ENCODE measurements at regions of chr20 and their contacts with region 1.

Region 1: GRCh38 chr20:31723319-31724078 is 831 bp upstream of the BCL2L1 start:
- DNase-seq: peak; percentile 99
- ATAC-seq: peak; percentile 90
- H3K4me3 Mint-ChIP-seq: peak overlapping the region; percentile 99
- H3K27ac Mint-ChIP-seq: peak overlapping the region; percentile 91
- H3K4me1 Mint-ChIP-seq: peaks cover 29% of the 10 kb centered on the region
- H3K27me3 Mint-ChIP-seq: peaks cover 2% of the 10 kb centered on the region

Region 2: GRCh38 chr20:31633339-31633914 is 90.1 kb before region 1 on chr20:
- POLR2A ChIA-PET with region 1: interaction called, 15 read pairs
- DNase-seq: no peak
- ATAC-seq: no peak
- H3K4me3 Mint-ChIP-seq: no peak overlapping the region
- H3K27ac Mint-ChIP-seq: no peak overlapping the region
- H3K4me1 Mint-ChIP-seq: peaks cover 7% of the 10 kb centered on the region
- H3K27me3 Mint-ChIP-seq: peaks cover 14% of the 10 kb centered on the region

Region 3: GRCh38 chr20:31661625-31662371 is 61.7 kb before region 1 on chr20:
- POLR2A ChIA-PET with region 1: interaction called, 149 read pairs
- DNase-seq: peak; percentile 86
- ATAC-seq: peak; percentile 73
- H3K4me3 Mint-ChIP-seq: peak overlapping the region; percentile 84
- H3K27ac Mint-ChIP-seq: peak overlapping the region; percentile 87
- H3K4me1 Mint-ChIP-seq: peaks cover 42% of the 10 kb centered on the region
- H3K27me3 Mint-ChIP-seq: no peaks in the 10 kb centered on the region

Region 4: GRCh38 chr20:31674895-31675827 is 48.3 kb before region 1 on chr20:
- POLR2A ChIA-PET with region 1: interaction called, 124 read pairs
- DNase-seq: peak; percentile 60
- ATAC-seq: peak; percentile 59
- H3K4me3 Mint-ChIP-seq: peak overlapping the region; percentile 86
- H3K27ac Mint-ChIP-seq: peak overlapping the region; percentile 93
- H3K4me1 Mint-ChIP-seq: peaks cover 70% of the 10 kb centered on the region
- H3K27me3 Mint-ChIP-seq: no peaks in the 10 kb centered on the region

Region 5: DNA sequence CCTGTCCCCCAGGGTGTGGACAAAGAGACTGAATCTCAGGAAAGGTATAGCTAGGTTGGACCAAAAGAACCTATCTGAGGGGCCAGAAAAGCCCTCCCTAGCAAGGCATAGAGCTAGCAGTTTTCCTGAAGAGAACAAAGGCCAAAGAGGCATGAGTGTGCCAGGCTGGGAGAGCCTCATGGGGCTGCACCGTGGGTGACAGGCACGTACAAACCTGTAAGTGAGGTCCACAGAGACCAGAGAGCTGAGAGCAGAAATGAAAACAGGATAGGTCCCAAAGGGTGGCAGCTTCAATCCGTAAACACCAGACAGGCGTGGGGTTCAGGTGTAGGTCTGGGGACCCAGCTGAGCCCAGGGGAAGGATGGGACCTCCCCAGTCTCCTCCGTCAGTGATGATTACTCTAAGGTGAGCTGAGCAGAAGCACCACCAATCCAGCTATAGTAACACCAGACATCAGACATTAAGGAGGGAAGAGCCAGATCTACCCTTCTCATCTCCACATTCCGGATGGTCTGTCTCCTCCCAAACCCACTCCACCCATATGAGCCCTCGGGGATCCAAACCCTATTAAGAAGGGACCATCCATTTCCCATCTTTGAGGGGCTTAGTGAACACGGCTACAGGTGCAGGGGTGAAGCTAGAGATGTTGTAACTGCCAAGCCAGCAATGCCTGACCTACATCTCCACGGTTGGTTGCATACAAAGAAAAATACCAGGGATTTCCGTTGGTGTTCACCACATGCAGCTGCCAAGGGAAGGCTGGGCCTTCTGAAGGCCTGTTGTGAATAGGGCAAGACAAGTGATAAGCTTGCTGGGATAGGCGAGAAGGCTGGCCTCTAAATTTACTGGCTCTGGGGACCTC is 39.1 kb before region 1 on chr20:
- POLR2A ChIA-PET with region 1: interaction called, 29 read pairs
- DNase-seq: no peak
- ATAC-seq: peak; percentile 51
- H3K4me3 Mint-ChIP-seq: peak overlapping the region; percentile 35
- H3K27ac Mint-ChIP-seq: peak overlapping the region; percentile 87
- H3K4me1 Mint-ChIP-seq: peaks cover 69% of the 10 kb centered on the region
- H3K27me3 Mint-ChIP-seq: no peaks in the 10 kb centered on the region

Region 6: DNA sequence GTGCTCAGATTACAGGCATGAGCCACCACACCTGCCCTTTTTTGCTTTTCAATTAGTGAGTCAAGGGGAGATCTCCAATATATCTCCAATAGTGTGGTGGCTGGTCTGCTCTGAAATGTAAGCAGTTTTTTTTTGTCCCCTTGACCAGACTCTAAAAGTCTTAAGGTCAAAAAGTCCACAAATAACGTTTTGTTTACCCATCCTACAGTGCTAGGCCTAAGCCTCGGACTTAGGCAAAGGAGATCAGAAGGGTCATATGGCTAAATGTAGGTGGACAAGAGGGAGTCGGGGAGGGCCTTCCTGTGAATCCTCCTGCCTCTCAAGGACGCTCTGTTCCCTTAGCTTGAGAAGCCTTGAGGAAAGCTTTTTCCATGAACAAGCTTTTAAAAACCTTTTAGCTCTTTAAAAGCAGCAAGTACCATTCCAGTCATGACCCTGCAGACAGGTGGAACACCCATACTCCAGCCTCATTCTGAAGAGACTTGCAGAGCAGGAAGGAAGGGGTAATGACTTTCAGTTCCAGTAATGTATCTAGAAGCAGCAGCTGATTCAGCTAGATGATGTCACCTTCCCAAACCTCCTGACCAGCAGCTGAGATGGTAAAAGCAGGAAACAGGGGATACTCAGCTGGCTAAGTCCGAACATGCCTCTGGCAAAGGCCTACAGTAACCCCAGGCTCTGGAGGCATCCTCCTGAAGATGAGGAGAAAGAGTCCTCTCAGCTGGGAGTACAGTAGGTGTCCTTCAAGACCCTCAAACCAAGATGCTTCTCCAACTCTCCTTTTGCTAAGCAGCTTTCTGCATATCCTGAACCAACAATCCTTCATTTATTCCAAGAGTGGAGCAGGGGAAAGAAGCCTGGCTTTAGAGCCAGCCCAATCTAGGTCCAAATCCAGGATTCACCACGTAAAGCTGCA is 24.4 kb before region 1 on chr20:
- POLR2A ChIA-PET with region 1: interaction called, 10 read pairs
- DNase-seq: no peak
- ATAC-seq: peak; percentile 85
- H3K4me3 Mint-ChIP-seq: peak overlapping the region; percentile 66
- H3K27ac Mint-ChIP-seq: peak overlapping the region; percentile 85
- H3K4me1 Mint-ChIP-seq: peaks cover 57% of the 10 kb centered on the region
- H3K27me3 Mint-ChIP-seq: no peaks in the 10 kb centered on the region

Region 7: GRCh38 chr20:31738729-31739561 is 15.4 kb after region 1 on chr20 and contains the start of gene TPX2:
- POLR2A ChIA-PET with region 1: interaction called, 14 read pairs
- DNase-seq: peak; percentile 77
- ATAC-seq: peak; percentile 91
- H3K4me3 Mint-ChIP-seq: no peak within 1 kb of the TSS
- H3K27ac Mint-ChIP-seq: no peak within 1 kb of the TSS
- H3K4me1 Mint-ChIP-seq: peaks cover 6% of the 10 kb centered on the region
- H3K27me3 Mint-ChIP-seq: peaks cover 8% of the 10 kb centered on the region
- total RNA-seq, gene TPX2: 111 to 114 TPM

Region 8: DNA sequence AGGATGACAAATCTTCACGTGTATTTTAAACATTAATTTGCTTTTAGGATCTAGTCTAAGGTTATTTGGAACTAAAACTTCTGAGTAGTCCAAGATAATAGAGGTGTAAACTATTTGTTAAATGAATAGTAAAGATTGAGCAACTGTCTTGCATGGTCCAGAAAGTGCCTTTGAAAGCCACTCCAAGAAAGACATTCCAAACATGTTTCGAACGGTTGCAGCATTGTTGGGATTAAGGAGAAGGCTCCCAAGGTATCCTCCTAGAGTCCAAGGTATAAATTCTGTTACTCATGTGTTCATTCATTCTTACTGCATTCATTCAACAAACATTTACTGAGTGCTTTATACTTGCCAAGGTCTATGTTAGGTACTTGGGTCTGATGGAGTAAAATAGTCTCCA is 66.9 kb after region 1 on chr20:
- POLR2A ChIA-PET with region 1: no interaction called
- DNase-seq: no peak
- ATAC-seq: no peak
- H3K4me3 Mint-ChIP-seq: no peak overlapping the region
- H3K27ac Mint-ChIP-seq: no peak overlapping the region
- H3K4me1 Mint-ChIP-seq: peaks cover 5% of the 10 kb centered on the region
- H3K27me3 Mint-ChIP-seq: no peaks in the 10 kb centered on the region

Region 9: DNA sequence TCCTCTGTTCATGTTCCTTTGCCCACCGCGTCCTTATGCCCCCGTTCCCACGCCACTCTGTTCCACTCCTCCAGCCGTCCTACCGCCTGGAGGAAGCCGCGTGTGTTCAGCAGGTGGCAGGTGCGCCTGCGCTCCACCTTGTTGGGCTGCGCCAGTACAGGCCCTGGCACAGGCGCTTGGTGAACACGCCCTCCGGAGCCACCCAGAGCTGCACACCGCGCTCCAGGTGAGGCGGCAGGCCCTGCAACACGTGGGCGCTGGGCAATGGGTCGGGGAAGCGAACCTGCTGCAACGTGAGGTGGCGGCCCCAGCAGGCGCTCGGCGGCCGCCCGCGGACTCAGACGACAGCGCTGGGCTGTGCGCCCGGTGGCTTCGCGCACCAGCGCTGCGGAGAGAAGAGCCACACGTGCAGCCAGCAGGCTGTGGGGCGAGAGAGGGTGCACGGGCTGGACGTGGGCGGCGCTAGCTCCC is 126.0 kb after region 1 on chr20:
- POLR2A ChIA-PET with region 1: no interaction called
- DNase-seq: no peak
- ATAC-seq: no peak
- H3K4me3 Mint-ChIP-seq: no peak overlapping the region
- H3K27ac Mint-ChIP-seq: no peak overlapping the region
- H3K4me1 Mint-ChIP-seq: no peaks in the 10 kb centered on the region
- H3K27me3 Mint-ChIP-seq: peaks cover 17% of the 10 kb centered on the region